Activated CD8-positive, alpha-beta memory T cell treated with anti-CD3 and anti-CD28 coated beads, Interleukin-2, amount 10 ng/mL, durations not matched to agents 7 days and 5 days (primary cell): ENCODE measurements at regions of chr2 and their contacts with region 1.

Region 1: GRCh38 chr2:143259368-143259958 is 130.2 kb downstream of the ARHGAP15 start:
- DNase-seq: peak; percentile 88
- ATAC-seq: peak; percentile 38
- H3K4me3 Mint-ChIP-seq: peak overlapping the region; percentile 72
- H3K27ac Mint-ChIP-seq: peak overlapping the region; percentile 98
- H3K4me1 Mint-ChIP-seq: peaks cover 71% of the 10 kb centered on the region
- H3K27me3 Mint-ChIP-seq: no peaks in the 10 kb centered on the region

Region 2: DNA sequence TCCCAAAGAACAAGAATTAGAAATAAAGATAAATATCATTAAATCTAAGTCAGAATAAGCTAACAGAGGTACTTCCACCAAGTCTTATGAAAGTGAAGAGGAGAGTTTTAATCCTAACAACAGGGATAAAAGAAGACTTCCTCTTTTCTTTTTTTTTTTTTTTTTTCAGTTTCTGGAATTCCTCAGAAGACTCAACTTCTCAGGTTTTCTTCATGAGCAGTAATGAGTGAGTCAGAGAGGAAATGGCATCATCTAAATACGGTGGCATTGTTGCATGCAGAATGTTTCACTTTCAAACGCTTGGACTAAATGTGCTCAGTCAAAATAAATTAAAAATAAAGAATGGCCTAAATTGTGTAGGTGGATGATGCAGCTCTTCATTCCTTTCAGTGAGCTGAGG is 175.8 kb before region 1 on chr2:
- CTCF ChIA-PET with region 1: interaction called, 13 read pairs
- DNase-seq: no peak
- ATAC-seq: peak; percentile 76
- H3K4me3 Mint-ChIP-seq: peak overlapping the region; percentile 12
- H3K27ac Mint-ChIP-seq: peak overlapping the region; percentile 71
- H3K4me1 Mint-ChIP-seq: peaks cover 41% of the 10 kb centered on the region
- H3K27me3 Mint-ChIP-seq: no peaks in the 10 kb centered on the region

Region 3: GRCh38 chr2:143128681-143129580 is 130.5 kb before region 1 on chr2 and contains the start of gene ARHGAP15:
- CTCF ChIA-PET with region 1: interaction called, 16 read pairs
- DNase-seq: peak; percentile 88
- ATAC-seq: peak; percentile 85
- H3K4me3 Mint-ChIP-seq: peak within 1 kb of the TSS; percentile 77
- H3K27ac Mint-ChIP-seq: peak within 1 kb of the TSS; percentile 100
- H3K4me1 Mint-ChIP-seq: peaks cover 46% of the 10 kb centered on the region
- H3K27me3 Mint-ChIP-seq: no peaks in the 10 kb centered on the region
- total RNA-seq, gene ARHGAP15: 101 to 152 TPM

Region 4: GRCh38 chr2:143205106-143205764 is 54.2 kb before region 1 on chr2:
- CTCF ChIA-PET with region 1: interaction called, 66 read pairs
- DNase-seq: no peak
- ATAC-seq: peak; percentile 82
- H3K4me3 Mint-ChIP-seq: no peak overlapping the region
- H3K27ac Mint-ChIP-seq: peak overlapping the region; percentile 75
- H3K4me1 Mint-ChIP-seq: peaks cover 38% of the 10 kb centered on the region
- H3K27me3 Mint-ChIP-seq: no peaks in the 10 kb centered on the region

Region 5: DNA sequence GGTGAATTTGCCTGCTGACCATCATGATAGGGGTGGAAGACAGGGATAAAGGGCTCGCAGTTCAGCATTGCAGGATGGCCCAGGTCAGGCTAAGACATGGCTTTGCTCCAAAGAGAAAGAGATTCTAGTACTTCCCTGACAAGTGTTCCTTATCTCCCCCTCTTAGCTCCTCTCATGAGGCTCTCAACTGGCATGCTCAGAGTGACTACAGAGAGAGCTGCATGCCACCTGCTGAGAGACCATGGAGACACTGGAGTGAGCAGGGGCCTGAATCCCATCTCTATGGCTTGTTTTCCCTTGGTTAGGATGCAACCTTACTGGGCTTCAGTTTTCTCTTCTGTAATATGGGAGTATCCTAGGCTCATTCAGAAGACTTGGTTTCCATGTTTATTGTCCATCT is 35.9 kb before region 1 on chr2:
- CTCF ChIA-PET with region 1: interaction called, 17 read pairs
- DNase-seq: no peak
- ATAC-seq: no peak
- H3K4me3 Mint-ChIP-seq: no peak overlapping the region
- H3K27ac Mint-ChIP-seq: no peak overlapping the region
- H3K4me1 Mint-ChIP-seq: peaks cover 36% of the 10 kb centered on the region
- H3K27me3 Mint-ChIP-seq: no peaks in the 10 kb centered on the region